HCT116 (cell line): ENCODE measurements at regions of chr4 and their contacts with region 1.

Region 1: DNA sequence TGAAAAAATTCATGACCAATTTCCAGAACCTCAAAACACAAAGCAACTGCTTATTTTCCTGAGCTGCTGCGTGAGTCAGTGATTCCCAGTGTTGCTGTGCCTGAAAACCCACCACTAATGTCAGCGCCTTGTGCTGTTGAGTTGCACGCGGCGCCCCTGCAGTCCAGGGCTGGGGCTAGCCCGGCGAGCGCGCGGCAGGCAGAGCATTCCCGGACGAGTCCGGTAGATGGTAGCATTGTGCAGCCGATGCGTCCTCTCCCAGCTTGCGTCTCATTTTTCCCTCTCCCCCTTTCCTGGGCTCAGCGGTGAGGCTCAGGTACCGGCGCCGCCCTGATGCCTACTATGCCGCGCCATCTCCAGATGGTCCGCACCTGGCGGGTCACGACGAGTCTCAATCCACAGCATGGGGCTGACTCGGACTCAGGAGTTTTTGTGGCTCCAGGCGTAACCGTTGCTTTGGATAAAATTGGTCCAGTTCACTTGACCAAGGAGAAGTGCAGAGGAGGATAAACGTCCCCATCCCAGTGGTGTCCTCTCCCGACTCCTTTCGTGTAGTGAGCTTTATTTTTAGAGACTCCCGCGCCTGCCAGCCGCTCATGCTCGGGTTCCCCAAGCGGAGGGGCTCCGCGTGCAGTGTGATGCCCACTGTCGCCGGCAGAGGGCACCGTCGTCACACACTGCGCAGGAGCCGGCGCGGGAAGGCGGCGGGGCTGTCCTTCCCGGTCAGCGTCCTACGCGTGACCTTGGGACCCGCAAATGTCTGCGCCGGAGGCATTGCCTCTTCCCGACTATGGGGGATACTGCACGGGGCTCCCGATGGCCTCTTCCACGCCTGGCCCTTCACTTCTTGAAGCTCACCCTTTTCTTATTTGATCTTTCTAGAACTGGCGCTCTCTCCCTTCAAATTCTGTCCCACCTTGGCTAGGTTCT is 53.6 kb upstream of the IGFBP7 start:
- DNase-seq: peak; percentile 43
- ATAC-seq: peak; percentile 97
- H3K4me3 ChIP-seq: peak overlapping the region; percentile 32 to 52
- H3K27ac ChIP-seq: no peak overlapping the region
- H3K4me1 ChIP-seq: peaks cover 2 to 15% of the 10 kb centered on the region in 2 experiments; a peak in 2 of 4 replicates
- H3K27me3 ChIP-seq: peaks cover 8% of the 10 kb centered on the region; the same call in 1 of the 2 replicates
- CTCF ChIP-seq: peak; percentile 37 to 96 (median 67); a peak in 5 of 6 replicates
- POLR2A ChIP-seq: no peak
- RAD21 ChIP-seq: peak; percentile 68

Region 2: GRCh38 chr4:57037982-57038604 is 125.7 kb before region 1 on chr4:
- CTCF ChIA-PET with region 1: interaction called, 8 read pairs
- POLR2A ChIA-PET with region 1: no interaction called
- RAD21 ChIA-PET with region 1: interaction called in 1 of 2 experiments, 6 read pairs
- intact Hi-C with region 1: loop called (anchors 2 kb)
- DNase-seq: peak; percentile 23
- ATAC-seq: peak; percentile 96
- H3K4me3 ChIP-seq: 0 out of 4 replicates have a peak overlapping the region, but pooled peaks of 1 of the 2 experiments have one; percentile 6
- H3K27ac ChIP-seq: no peak overlapping the region
- H3K4me1 ChIP-seq: 0 out of 4 replicates have a peak, but pooled peaks cover 3 to 4% of the 10 kb centered on the region in 2 experiments
- H3K27me3 ChIP-seq: no peaks in the 10 kb centered on the region
- CTCF ChIP-seq: peak; percentile 39 to 99 (median 97); a peak in 5 of 6 replicates
- POLR2A ChIP-seq: no peak
- RAD21 ChIP-seq: peak; percentile 77

Region 3: DNA sequence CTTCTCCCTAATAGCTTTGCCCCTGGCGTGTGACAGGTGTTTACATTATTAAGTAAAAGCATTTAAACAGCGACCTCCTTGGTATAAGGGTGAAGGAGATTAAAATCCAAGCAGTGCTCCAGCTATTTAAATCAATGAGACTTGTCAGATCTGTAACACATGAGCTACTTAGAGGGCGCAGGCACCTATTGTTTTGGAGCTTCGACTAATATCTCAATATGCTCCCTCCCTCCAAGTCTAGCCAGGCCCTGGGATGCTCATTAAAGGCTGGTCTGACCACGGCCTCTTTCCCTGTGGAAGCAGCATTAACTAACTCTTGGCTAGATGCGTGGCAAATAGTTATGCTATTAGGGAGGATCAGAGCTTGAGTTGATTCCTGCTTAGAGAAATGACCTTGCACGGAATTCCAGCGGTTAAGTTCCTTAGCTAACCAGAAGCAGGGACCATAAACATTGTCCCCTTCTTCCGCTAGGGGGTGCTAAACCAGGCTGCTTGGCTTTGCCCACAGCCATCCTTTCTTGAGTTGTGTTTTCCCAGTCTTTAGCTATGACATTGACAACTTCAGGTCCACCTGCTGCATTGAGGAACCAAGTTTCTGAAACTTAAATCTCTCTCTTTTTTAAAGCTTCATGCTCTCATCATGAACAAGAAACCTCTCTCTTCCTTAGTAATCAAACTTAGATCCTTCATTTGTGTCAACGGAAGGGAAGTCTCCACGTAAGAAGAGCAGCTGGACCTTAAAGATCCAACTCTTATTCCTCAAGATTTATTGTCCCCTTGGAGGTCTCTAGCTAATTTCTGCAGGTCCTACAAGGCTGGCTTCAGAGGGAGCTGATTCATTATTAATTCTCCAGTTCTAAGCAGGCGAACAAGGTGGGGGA is 27.0 kb after region 1 on chr4:
- CTCF ChIA-PET with region 1: interaction called, 17 read pairs
- POLR2A ChIA-PET with region 1: no interaction called
- RAD21 ChIA-PET with region 1: no interaction called
- intact Hi-C with region 1: no loop called
- DNase-seq: peak; percentile 35
- ATAC-seq: peak; percentile 90
- H3K4me3 ChIP-seq: no peak overlapping the region
- H3K27ac ChIP-seq: no peak overlapping the region
- H3K4me1 ChIP-seq: no peaks in the 10 kb centered on the region
- H3K27me3 ChIP-seq: no peaks in the 10 kb centered on the region; the same call in 1 of the 2 replicates
- CTCF ChIP-seq: peak in 2 of 3 experiments; percentile 88 to 91; a peak in 4 of 6 replicates
- POLR2A ChIP-seq: no peak
- RAD21 ChIP-seq: peak; percentile 18; the same call in 1 of the 2 replicates

Region 4: DNA sequence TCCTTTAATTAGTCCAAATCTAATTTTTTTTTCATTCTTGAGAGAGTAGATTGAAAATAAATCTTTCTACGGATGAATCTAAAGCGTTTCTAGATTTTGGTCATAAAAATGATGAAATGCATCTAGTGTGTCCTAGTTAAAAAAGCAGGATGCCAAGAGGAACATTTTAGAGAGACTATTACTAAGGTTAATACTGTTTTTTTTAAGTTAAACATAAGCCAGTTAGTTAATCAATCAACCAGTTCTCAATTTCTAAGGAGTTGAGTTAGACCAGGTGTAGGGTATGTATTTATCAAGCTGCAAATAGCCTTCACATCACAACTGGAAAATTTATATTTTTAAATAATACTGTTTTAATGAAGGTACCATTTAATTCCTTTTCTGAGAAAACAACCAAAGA is 625.9 kb after region 1 on chr4:
- CTCF ChIA-PET with region 1: no interaction called
- POLR2A ChIA-PET with region 1: no interaction called
- RAD21 ChIA-PET with region 1: no interaction called
- intact Hi-C with region 1: no loop called
- DNase-seq: no peak
- ATAC-seq: no peak
- H3K4me3 ChIP-seq: no peak overlapping the region
- H3K27ac ChIP-seq: no peak overlapping the region
- H3K4me1 ChIP-seq: no peaks in the 10 kb centered on the region
- H3K27me3 ChIP-seq: no peaks in the 10 kb centered on the region
- CTCF ChIP-seq: no peak
- POLR2A ChIP-seq: no peak
- RAD21 ChIP-seq: no peak